ENCODE measurements at regions of chr6 and their contacts with region 1.

Region 1: DNA sequence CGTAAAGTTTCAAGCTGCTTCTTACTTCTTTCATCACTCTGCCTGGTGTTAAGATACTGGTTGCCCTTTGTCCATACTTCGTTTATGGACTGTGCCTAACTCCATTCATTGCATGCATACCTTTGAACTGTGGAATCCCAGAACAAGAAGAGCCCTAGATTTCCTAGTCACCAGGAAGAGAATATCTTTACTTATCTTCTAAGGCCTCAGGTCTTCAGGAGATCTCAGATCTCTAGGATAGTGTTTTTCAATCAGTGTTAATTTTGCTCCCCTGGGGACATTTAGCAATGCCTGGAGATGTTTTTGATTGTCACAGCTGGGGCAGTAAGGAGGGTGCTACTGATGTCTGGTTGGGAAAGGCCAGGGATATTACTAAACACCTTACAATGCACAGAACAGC is 35.5 kb upstream of the GJA1 start:
- DNase-seq: no peak
- H3K4me3 ChIP-seq: no peak overlapping the region
- H3K27ac ChIP-seq: no peak overlapping the region
- H3K4me1 ChIP-seq: no peaks in the 10 kb centered on the region
- H3K27me3 ChIP-seq: no peaks in the 10 kb centered on the region
- CTCF ChIP-seq: no peak
- EP300 ChIP-seq: no peak
- POLR2A ChIP-seq: no peak
- RAD21 ChIP-seq: no peak

Region 2: DNA sequence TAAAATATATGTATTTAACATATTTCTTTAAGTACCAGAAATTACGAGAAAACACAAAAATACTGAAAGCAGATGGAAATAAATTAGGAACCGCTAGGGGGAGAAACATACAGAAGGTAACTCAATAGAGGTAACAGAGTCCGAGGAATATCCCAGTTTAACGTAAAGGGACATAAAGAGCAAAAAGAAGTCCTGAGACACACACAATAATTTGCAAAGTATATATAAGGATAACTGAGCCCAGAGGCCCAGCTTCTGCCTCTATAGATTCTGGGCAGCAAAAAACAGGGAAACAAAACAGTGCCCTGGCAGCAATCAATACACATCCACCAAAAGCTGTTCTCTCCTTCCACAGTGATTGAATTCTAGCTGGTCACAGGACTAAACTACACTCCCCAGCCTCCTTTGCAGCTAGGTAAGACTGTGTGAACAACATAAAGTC is 80.8 kb before region 1 on chr6:
- CTCF ChIA-PET with region 1: interaction called, 39 read pairs
- POLR2A ChIA-PET with region 1: no interaction called
- DNase-seq: peak in 1 of 2 experiments; percentile 48
- H3K4me3 ChIP-seq: peak overlapping the region in 1 of 4 experiments; percentile 29; a peak in 1 of 8 replicates
- H3K27ac ChIP-seq: no peak overlapping the region
- H3K4me1 ChIP-seq: no peaks in the 10 kb centered on the region
- H3K27me3 ChIP-seq: no peaks in the 10 kb centered on the region
- CTCF ChIP-seq: peak in 2 of 3 experiments; percentile 21 to 46; a peak in 2 of 4 replicates
- EP300 ChIP-seq: no peak
- POLR2A ChIP-seq: no peak
- RAD21 ChIP-seq: peak; percentile 33 to 35; a peak in 3 of 4 replicates

Region 3: GRCh38 chr6:121354764-121355163 is 45.2 kb before region 1 on chr6:
- CTCF ChIA-PET with region 1: interaction called, 12 read pairs
- POLR2A ChIA-PET with region 1: interaction called, 3 read pairs
- DNase-seq: no peak
- H3K4me3 ChIP-seq: no peak overlapping the region
- H3K27ac ChIP-seq: no peak overlapping the region
- H3K4me1 ChIP-seq: no peaks in the 10 kb centered on the region
- H3K27me3 ChIP-seq: no peaks in the 10 kb centered on the region
- CTCF ChIP-seq: peak; percentile 28 to 48 (median 40); a peak in 3 of 4 replicates
- EP300 ChIP-seq: no peak
- POLR2A ChIP-seq: no peak
- RAD21 ChIP-seq: peak; percentile 30 to 31; a peak in 3 of 4 replicates

Region 4: GRCh38 chr6:121389419-121389818 is 10.5 kb before region 1 on chr6:
- CTCF ChIA-PET with region 1: interaction called, 41 read pairs
- POLR2A ChIA-PET with region 1: no interaction called
- DNase-seq: no peak
- H3K4me3 ChIP-seq: no peak overlapping the region
- H3K27ac ChIP-seq: no peak overlapping the region
- H3K4me1 ChIP-seq: no peaks in the 10 kb centered on the region
- H3K27me3 ChIP-seq: no peaks in the 10 kb centered on the region
- CTCF ChIP-seq: no peak
- EP300 ChIP-seq: no peak
- POLR2A ChIP-seq: no peak
- RAD21 ChIP-seq: no peak

Region 5: GRCh38 chr6:121436960-121437850 is 37.2 kb after region 1 on chr6:
- CTCF ChIA-PET with region 1: no interaction called
- POLR2A ChIA-PET with region 1: no interaction called
- DNase-seq: no peak
- H3K4me3 ChIP-seq: peak overlapping the region; percentile 85 to 94 (median 92)
- H3K27ac ChIP-seq: peak overlapping the region; percentile 91
- H3K4me1 ChIP-seq: peaks cover 0 to 19% (median 5%) of the 10 kb centered on the region in 4 experiments; a peak in 5 of 7 replicates
- H3K27me3 ChIP-seq: no peaks in the 10 kb centered on the region
- CTCF ChIP-seq: no peak
- EP300 ChIP-seq: no peak
- POLR2A ChIP-seq: peak; percentile 41 to 59; a peak in 2 of 3 replicates
- RAD21 ChIP-seq: no peak